ENCODE measurements at regions of chr22 and their contacts with region 1.

Region 1: GRCh38 chr22:37681556-37682049 is 4.5 kb upstream of the NOL12 start:
- DNase-seq: peak; percentile 87
- H3K4me3 ChIP-seq: no peak overlapping the region
- H3K27ac ChIP-seq: peak overlapping the region in 2 of 8 donors; percentile 4 to 46
- H3K4me1 ChIP-seq: peaks cover 12 to 57% (median 39%) of the 10 kb centered on the region in 6 donors
- H3K27me3 ChIP-seq: no peaks in the 10 kb centered on the region
- CTCF ChIP-seq: peak; percentile 82 to 96 (median 88)
- POLR2A ChIP-seq: no peak

Region 2: DNA sequence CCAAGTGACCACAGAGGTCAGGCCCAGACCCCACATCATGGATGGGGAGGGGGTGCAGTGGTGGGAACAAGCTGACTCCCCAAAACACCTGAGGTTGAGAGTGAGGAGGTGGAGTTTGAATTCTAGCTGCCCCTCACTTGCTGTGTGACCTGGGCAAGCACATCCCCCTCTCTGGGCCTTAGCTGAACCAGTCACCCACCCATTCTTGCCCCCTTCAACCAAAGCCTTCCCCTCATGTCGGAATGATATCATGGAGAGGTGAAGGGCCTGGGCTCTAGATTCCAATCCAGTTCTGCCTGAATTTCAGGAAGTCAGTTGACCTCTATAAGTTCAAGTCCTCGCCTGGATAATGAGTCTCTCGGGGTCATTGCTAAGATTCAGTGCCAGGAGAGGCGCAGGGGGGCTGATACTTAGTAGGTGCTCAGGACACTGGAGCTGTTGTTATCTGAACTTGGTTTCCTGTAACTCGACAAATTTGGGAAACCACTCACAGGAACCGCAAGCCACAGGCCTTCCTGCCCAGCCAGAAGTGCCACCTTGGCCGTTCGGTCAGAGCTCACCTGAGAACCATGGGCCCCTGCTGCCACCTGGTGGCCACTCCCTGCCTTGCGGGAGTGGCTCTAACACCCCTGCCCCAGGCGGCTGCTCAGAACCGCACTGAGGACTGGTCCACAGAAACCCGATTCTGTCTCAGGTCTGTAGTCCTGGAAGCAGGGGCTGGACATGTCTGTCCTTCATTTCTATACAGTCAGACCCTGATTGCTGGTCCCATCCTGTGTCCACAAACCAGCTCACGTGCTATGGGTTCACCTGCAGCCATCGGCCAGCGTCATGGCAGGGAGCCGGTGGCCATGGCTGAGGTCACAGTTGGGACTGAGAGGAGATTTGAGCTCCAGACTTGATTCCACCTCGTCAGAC is 114.4 kb before region 1 on chr22:
- intact Hi-C with region 1: no loop called
- DNase-seq: peak; percentile 98
- H3K4me3 ChIP-seq: peak overlapping the region in 2 of 8 donors; percentile 9 to 53
- H3K27ac ChIP-seq: peak overlapping the region; percentile 19 to 90 (median 64)
- H3K4me1 ChIP-seq: peaks cover 21 to 70% (median 46%) of the 10 kb centered on the region in 6 donors
- H3K27me3 ChIP-seq: peaks cover 0 to 42% (median 5%) of the 10 kb centered on the region in 7 donors
- CTCF ChIP-seq: peak; percentile 97 to 99 (median 98)
- POLR2A ChIP-seq: no peak

Region 3: DNA sequence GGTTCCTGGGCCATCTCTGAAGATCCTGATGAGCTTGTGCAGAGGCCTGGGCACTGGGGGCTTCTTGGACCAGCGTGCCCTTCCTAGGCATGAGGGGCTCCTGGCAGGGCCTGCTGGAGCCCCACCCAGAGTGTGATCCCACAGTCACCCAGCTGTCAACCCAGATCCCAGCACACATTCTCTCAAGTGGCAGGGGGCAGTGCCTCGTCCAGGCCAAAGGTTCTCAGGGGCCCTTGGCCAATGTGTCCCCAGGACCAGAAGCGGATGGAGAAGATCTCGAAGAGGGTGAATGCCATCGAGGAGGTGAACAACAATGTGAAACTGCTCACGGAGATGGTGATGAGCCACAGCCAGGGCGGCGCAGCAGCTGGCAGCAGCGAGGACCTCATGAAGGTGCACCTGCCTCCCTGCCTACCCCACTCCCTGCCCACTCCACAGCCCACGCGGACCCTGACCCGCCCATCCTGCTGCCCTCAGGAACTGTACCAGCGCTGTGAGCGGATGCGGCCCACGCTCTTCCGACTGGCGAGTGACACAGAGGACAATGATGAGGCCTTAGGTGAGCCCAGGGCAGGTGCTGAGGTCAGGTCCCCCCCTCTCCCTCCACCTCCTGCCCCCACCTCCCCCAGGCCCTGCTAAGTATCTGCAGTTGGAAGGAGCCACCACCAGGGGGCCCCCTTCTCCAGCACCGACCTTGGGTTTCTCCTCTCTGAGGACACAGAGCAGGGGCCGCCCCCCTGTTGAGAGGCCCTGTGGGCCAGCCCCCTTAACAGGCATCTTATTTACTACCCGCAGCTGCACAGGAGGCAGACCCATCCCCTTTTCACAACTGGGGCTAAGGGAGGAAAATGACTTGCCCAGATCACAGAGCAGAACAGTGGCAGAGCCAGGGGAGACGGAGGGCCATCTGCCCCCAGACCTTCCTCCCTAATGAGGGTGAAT is 58.3 kb before region 1 on chr22:
- intact Hi-C with region 1: loop called (anchors 5 kb)
- DNase-seq: peak; percentile 93
- H3K4me3 ChIP-seq: no peak overlapping the region
- H3K27ac ChIP-seq: peak overlapping the region; percentile 7 to 96 (median 44)
- H3K4me1 ChIP-seq: peaks cover 36 to 75% (median 50%) of the 10 kb centered on the region in 6 donors
- H3K27me3 ChIP-seq: no peaks in the 10 kb centered on the region
- CTCF ChIP-seq: peak; percentile 29 to 97 (median 92)
- POLR2A ChIP-seq: no peak

Region 4: GRCh38 chr22:37643225-37643847 is 38.3 kb before region 1 on chr22:
- intact Hi-C with region 1: loop called (anchors 5 kb)
- DNase-seq: peak; percentile 95
- H3K4me3 ChIP-seq: peak overlapping the region in 1 of 8 donors; percentile 31
- H3K27ac ChIP-seq: peak overlapping the region in 5 of 8 donors; percentile 10 to 96 (median 28)
- H3K4me1 ChIP-seq: peaks cover 20 to 67% (median 53%) of the 10 kb centered on the region in 6 donors
- H3K27me3 ChIP-seq: peaks cover 0 to 8% (median 0%) of the 10 kb centered on the region in 7 donors
- CTCF ChIP-seq: peak; percentile 79 to 98 (median 95)
- POLR2A ChIP-seq: no peak